Left ventricle myocardium superior (tissue), 1 donor: ENCODE measurements at regions of chr5 and their contacts with region 1.

Region 1: DNA sequence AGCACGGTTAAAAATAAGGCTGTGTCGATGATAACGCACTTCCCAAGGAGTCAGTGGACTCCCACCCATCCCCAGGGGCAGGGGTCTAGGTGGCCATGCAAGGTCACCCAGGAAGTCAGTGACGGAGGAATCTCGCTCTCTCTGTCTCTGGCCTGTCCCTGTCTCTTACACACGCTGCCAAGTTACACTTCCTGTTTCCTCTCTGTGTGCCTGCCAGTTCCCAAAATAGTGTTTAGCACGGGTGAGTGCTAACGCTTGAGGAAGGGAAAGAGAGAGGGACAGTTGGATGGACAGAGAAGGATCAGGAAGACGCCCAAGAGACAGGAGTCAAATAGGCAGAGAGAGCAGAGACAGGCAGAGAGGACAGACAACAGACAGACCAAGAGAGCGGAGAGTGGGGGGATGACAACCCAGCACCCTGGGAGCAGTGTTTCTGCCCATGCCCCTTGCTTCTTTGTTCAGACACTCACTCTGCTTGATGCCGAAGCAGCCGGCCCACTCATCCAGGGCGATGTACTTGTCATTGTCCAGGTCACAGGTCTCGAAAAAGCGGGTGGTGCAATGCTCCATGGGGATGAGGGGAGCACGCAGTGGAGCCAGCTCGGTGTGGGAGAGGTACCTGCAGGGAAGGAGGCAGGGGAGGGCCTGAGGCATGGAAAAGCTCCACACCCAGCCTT is 23.0 kb downstream of the SPARC start:
- DNase-seq: peak; percentile 63
- ATAC-seq: peak; percentile 81

Region 2: DNA sequence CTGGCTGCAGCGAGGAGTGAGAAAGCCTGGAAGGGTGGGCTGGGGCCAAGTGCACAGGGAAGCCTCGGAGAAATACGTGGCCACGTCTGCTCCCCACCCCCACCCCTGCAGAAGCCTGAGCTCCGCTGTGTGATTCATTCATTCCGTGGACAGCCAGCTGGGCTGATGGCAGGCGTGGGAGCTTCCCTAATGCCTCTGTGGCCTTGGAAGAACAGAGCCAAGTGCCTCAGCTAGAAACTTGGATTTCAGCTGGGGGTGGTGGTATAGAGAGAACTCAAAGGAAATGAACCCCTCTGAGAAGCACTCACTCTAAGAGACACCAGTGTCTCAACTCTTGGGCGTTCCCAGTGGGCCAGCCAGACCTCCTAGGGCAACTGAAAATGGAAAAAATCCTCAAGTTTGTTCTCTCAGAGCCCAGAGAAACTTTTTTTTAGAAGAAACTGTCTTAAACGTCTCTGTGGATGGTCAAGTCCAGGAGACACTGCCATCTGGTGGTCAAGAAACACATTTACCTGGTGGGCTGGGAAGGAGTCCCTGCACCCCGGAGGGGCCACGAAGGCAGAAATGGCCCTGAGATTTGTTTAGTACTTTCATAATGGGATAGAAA is 76.7 kb after region 1 on chr5:
- intact Hi-C with region 1: loop called (anchors 5 kb)
- DNase-seq: peak; percentile 76
- ATAC-seq: peak; percentile 90